ENCODE measurements at regions of chr16 and their contacts with region 1.

Region 1: GRCh38 chr16:8797364-8798173 is at the starts of genes PMM2 and TMEM186:
- DNase-seq: peak; percentile 94 to 98 (median 97)
- H3K4me3 ChIP-seq: peak within 1 kb of the TSS; percentile 81 to 99 (median 94)
- H3K27ac ChIP-seq: peak within 1 kb of the TSS; percentile 41 to 92 (median 63)
- H3K4me1 ChIP-seq: peaks cover 24 to 31% of the 10 kb centered on the region in 2 donors
- H3K27me3 ChIP-seq: no peaks in the 10 kb centered on the region
- CTCF ChIP-seq: peak in 1 of 6 experiments; percentile 27
- POLR2A ChIP-seq: no peak
- total RNA-seq, gene PMM2: 7.4 to 69.9 (median 23.1) TPM
- total RNA-seq, gene TMEM186: 7.9 to 14.6 (median 13.2) TPM

Region 2: DNA sequence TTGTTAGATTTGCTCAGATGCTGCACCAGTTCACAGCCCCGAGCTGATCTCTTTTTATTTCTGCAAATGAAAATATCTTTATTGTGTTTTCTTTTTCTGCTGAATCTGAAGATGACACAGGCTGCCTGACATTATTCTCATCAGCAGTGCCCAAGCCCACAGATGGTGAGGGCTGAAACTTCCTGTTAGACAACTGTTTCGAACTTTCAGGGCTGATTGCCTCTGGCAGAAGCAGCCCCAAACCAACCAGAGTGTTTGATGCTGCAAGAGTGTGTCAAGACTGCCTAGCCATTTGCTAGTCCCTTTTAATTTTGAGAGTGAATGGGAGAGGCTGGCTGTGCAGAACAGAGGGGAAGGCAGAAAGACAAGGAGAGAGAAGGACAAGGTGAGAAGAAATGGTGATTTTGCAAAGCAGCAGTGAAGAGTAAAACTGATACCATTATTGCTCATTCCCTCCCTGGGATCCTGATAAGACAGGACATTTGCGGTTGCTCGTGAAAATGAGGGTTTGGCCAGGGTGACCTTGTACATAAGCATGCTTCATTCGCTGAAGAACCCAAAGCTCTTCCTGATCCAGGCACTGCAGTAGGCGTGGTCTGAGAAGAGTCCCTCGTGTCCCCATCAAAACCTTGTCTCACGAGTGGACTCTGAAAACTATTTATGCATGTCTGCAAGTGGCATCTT is 284.5 kb before region 1 on chr16:
- intact Hi-C with region 1: no loop called
- DNase-seq: no peak
- H3K4me3 ChIP-seq: no peak overlapping the region
- H3K27ac ChIP-seq: no peak overlapping the region
- H3K4me1 ChIP-seq: no peaks in the 10 kb centered on the region
- H3K27me3 ChIP-seq: no peaks in the 10 kb centered on the region
- CTCF ChIP-seq: no peak
- POLR2A ChIP-seq: no peak

Region 3: GRCh38 chr16:8567750-8568617 is 229.6 kb before region 1 on chr16:
- intact Hi-C with region 1: loop called in 1 of 2 experiments (anchors 10 kb)
- DNase-seq: peak; percentile 65 to 90 (median 82)
- H3K4me3 ChIP-seq: no peak overlapping the region
- H3K27ac ChIP-seq: no peak overlapping the region
- H3K4me1 ChIP-seq: no peaks in the 10 kb centered on the region
- H3K27me3 ChIP-seq: no peaks in the 10 kb centered on the region
- CTCF ChIP-seq: peak; percentile 99
- POLR2A ChIP-seq: no peak

Region 4: GRCh38 chr16:8660841-8661301 is 136.7 kb before region 1 on chr16:
- intact Hi-C with region 1: loop called (anchors 5 kb)
- DNase-seq: peak; percentile 61 to 88 (median 76)
- H3K4me3 ChIP-seq: no peak overlapping the region
- H3K27ac ChIP-seq: no peak overlapping the region
- H3K4me1 ChIP-seq: no peaks in the 10 kb centered on the region
- H3K27me3 ChIP-seq: no peaks in the 10 kb centered on the region
- CTCF ChIP-seq: peak; percentile 30 to 89 (median 80)
- POLR2A ChIP-seq: no peak

Region 5: DNA sequence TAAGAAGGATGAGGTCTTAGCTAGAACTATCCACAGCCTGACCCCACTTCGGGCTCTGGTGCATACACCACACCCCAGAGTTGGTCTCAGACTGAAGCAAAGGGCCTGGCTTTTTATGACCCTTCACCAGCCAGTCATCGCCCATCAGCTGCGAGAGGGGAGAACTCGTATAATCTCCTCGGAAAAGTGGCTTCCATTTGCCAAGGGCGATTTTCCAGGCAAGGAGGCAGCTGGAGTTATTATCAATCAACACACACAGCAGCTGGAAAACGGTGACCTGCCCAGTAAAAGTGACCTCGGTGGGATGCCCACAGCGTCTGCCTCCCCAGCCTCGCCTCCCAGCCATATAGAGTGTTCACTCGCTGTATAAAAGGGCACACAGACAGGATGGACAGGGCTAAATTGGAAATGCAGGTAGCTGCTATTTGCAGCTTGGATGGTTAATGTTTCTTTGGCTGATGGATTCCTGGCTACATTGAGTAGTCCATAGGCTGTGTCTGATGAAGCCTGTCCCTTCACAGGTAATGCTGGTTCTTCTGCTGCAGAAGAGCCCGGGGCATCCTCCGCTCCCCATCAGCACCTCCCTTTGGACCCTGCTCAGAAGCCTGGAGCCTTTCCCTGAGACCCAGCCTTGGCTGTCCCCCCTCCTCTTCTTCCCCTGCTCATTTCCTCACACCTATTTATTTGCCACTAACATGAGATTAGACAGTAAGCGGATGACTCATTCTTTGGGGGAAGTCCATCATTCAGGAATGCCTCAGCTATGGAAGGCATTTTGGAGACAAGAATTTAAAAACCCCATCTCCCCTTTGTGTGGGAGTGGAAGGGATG is 45.9 kb before region 1 on chr16:
- intact Hi-C with region 1: no loop called
- DNase-seq: peak in 3 of 7 donors; percentile 18 to 29 (median 23)
- H3K4me3 ChIP-seq: no peak overlapping the region
- H3K27ac ChIP-seq: no peak overlapping the region
- H3K4me1 ChIP-seq: no peaks in the 10 kb centered on the region
- H3K27me3 ChIP-seq: no peaks in the 10 kb centered on the region
- CTCF ChIP-seq: no peak
- POLR2A ChIP-seq: no peak